ENCODE measurements at regions of chr1 and their contacts with region 1.

Region 1: GRCh38 chr1:200154069-200154767 is 126.7 kb downstream of the NR5A2 start:
- DNase-seq: no peak
- H3K4me3 ChIP-seq: no peak overlapping the region
- H3K27ac ChIP-seq: no peak overlapping the region
- H3K4me1 ChIP-seq: no peaks in the 10 kb centered on the region
- H3K27me3 ChIP-seq: no peaks in the 10 kb centered on the region
- CTCF ChIP-seq: no peak
- EP300 ChIP-seq: no peak
- POLR2A ChIP-seq: no peak
- RAD21 ChIP-seq: no peak

Region 2: GRCh38 chr1:200139661-200140250 is 14.5 kb before region 1 on chr1:
- CTCF ChIA-PET with region 1: interaction called, 18 read pairs
- POLR2A ChIA-PET with region 1: no interaction called
- DNase-seq: no peak
- H3K4me3 ChIP-seq: no peak overlapping the region
- H3K27ac ChIP-seq: no peak overlapping the region
- H3K4me1 ChIP-seq: no peaks in the 10 kb centered on the region
- H3K27me3 ChIP-seq: no peaks in the 10 kb centered on the region
- CTCF ChIP-seq: peak in 2 of 3 experiments; percentile 57 to 67; a peak in 3 of 4 replicates
- EP300 ChIP-seq: no peak
- POLR2A ChIP-seq: no peak
- RAD21 ChIP-seq: peak; percentile 68 to 75

Region 3: GRCh38 chr1:200168926-200169325 is 14.7 kb after region 1 on chr1:
- CTCF ChIA-PET with region 1: interaction called, 13 read pairs
- POLR2A ChIA-PET with region 1: interaction called, 3 read pairs
- DNase-seq: no peak
- H3K4me3 ChIP-seq: no peak overlapping the region
- H3K27ac ChIP-seq: no peak overlapping the region
- H3K4me1 ChIP-seq: peaks cover 0 to 4% (median 0%) of the 10 kb centered on the region in 4 experiments; a peak in 1 of 7 replicates
- H3K27me3 ChIP-seq: no peaks in the 10 kb centered on the region
- CTCF ChIP-seq: no peak
- EP300 ChIP-seq: no peak
- POLR2A ChIP-seq: no peak
- RAD21 ChIP-seq: no peak

Measured in H1 (cell line).